CD4-positive, alpha-beta T cell (primary cell): ENCODE measurements at regions of chr12 and their contacts with region 1.

Region 1: GRCh38 chr12:48618541-48618940 is 48.7 kb upstream of the LALBA start:
- DNase-seq: peak; percentile 51 to 87 (median 68)
- ATAC-seq: peak; percentile 95
- H3K4me3 ChIP-seq: no peak overlapping the region
- H3K4me3 Mint-ChIP-seq: no peak overlapping the region
- H3K27ac ChIP-seq: no peak overlapping the region
- H3K27ac Mint-ChIP-seq: no peak overlapping the region
- H3K4me1 ChIP-seq: no peaks in the 10 kb centered on the region
- H3K4me1 Mint-ChIP-seq: no peaks in the 10 kb centered on the region
- H3K27me3 ChIP-seq: peaks cover 0 to 11% of the 10 kb centered on the region in 2 experiments
- H3K27me3 Mint-ChIP-seq: peaks cover 54% of the 10 kb centered on the region
- CTCF ChIP-seq: peak; percentile 95

Region 2: DNA sequence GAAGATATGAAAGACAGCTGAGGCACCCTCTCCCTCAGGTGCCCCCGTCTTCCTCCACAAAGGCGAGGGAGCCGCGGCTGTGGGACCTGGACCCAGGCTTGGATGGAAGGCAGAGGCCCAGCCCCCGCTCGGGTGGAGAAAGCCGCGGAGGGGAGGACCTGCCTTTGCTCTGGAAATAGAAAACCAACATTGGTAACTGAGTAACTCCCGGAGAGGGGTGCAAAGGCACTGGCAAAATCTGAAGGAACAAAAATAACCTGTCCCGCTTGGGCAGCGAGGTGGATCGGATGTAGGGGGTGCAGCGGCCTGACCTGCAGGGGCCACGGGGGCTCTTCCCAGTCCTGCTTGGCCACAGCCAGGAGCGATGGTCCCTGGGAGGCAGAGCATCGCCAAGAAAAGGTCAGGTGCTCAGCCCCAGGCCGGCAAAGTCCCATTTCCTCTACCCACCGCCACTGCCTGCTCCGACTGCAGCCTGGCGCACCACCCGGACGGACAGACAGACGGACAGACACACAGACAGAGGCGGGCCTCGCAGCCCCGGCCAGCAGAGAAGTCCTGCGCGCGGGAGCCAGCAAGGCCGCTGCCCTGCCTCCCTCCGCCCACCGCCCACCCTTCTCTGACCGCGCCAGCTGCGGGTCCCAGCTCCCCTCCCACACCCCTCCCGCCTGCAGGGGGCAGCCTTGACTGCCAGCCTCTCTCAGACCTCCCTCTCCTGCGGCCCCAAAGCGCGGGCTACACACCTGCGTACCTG is 676.5 kb before region 1 on chr12:
- CTCF ChIA-PET with region 1: no interaction called
- POLR2A ChIA-PET with region 1: no interaction called
- intact Hi-C with region 1: loop called (anchors 5 to 10 kb)
- DNase-seq: peak in 13 of 14 experiments; percentile 14 to 70 (median 43)
- ATAC-seq: peak; percentile 48
- H3K4me3 ChIP-seq: no peak overlapping the region
- H3K4me3 Mint-ChIP-seq: no peak overlapping the region
- H3K27ac ChIP-seq: no peak overlapping the region
- H3K27ac Mint-ChIP-seq: no peak overlapping the region
- H3K4me1 ChIP-seq: peaks cover 3% of the 10 kb centered on the region
- H3K4me1 Mint-ChIP-seq: no peaks in the 10 kb centered on the region
- H3K27me3 ChIP-seq: peaks cover 4 to 10% of the 10 kb centered on the region in 2 experiments
- H3K27me3 Mint-ChIP-seq: peaks cover 18% of the 10 kb centered on the region
- CTCF ChIP-seq: peak; percentile 26

Region 3: DNA sequence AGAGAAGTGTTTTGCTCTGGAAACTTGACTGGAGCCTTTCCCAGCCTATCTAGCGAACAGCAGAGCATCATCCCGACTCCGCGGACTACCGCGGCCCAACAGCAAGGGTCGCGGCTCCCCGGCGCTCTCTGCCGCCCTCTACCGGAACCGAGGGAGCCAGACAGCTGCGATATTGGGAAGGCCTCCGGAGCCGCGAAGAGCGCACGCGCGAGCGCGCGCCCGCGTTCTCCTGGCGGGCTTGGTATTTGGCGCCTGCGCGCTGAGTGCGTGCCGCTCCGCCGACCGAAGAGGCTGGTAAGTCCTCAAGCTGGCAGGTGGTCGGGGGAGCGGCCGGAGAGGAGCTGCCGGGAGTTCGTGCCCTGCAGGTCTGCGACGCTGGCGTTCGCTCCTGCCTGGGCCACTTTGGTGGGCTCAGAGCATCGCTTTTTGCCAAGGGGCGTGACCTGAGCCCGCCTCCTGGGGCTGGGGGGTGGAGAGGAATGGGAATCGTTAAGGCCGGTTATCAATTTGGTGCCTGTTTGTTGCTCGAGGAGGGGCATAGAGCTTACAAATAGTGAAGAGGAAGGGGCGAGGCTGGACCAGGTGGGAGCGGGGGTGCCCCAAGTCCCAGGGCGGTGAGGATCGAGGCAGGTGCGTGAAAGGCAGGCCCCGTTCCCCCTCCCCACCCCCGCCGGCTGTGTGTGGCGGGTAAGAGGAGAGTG is 655.1 kb before region 1 on chr12 and contains the start of gene TMEM106C:
- CTCF ChIA-PET with region 1: no interaction called
- POLR2A ChIA-PET with region 1: no interaction called
- intact Hi-C with region 1: loop called in 1 of 2 experiments (anchors 1 kb)
- DNase-seq: peak; percentile 84 to 97 (median 90)
- ATAC-seq: peak; percentile 97
- H3K4me3 ChIP-seq: peak within 1 kb of the TSS; percentile 85
- H3K4me3 Mint-ChIP-seq: peak within 1 kb of the TSS; percentile 95
- H3K27ac ChIP-seq: no peak within 1 kb of the TSS
- H3K27ac Mint-ChIP-seq: peak within 1 kb of the TSS; percentile 81
- H3K4me1 ChIP-seq: peaks cover 17% of the 10 kb centered on the region
- H3K4me1 Mint-ChIP-seq: peaks cover 38% of the 10 kb centered on the region
- H3K27me3 ChIP-seq: peaks cover 0 to 5% of the 10 kb centered on the region in 2 experiments
- H3K27me3 Mint-ChIP-seq: peaks cover 6% of the 10 kb centered on the region
- CTCF ChIP-seq: peak; percentile 97
- total RNA-seq, gene TMEM106C: 17.4 to 20.3 TPM

Region 4: DNA sequence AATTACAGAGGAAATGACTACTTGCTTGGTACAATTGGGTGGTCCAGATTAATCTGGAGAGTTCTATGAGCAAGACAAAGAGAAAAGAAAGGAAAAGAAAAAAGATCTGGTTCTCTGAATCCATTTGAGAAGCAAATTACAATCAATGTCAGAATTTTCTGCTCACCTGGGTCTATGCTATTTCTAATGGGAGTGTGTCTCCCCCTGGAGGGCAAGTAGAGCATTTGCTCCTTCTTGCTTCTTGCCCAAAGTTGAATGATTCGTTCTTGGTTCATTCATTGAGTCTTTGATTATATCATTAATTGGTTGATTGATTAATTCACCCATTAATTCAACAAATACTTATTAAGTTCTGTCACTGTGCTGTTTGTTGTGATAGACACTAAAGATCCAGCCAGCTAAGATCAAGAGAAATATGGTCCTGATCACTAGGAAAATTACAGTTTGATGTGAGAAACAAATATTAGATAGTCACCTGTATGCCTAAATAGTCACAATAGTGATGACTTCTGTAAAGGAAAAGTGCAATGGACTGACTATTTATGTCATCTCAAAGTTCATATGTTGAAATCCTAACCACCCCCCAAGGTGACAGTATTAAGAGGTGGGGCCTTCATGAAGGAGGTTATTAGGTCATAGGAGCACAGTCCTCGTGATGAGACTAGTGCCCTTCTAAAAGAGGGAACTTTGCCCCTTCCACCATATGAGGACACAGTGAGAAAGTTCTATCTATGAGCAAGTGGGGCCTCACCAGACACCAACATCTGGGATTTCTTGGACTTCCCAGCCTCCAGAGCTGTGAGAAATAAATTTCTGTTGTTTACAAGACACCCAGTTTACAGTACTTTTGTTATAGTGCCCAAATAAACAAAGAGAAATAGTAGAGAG is 453.2 kb before region 1 on chr12:
- CTCF ChIA-PET with region 1: no interaction called
- POLR2A ChIA-PET with region 1: no interaction called
- intact Hi-C with region 1: loop called (anchors 1 to 5 kb)
- DNase-seq: peak in 11 of 14 experiments; percentile 11 to 87 (median 44)
- ATAC-seq: peak; percentile 87
- H3K4me3 ChIP-seq: no peak overlapping the region
- H3K4me3 Mint-ChIP-seq: no peak overlapping the region
- H3K27ac ChIP-seq: no peak overlapping the region
- H3K27ac Mint-ChIP-seq: no peak overlapping the region
- H3K4me1 ChIP-seq: no peaks in the 10 kb centered on the region
- H3K4me1 Mint-ChIP-seq: peaks cover 7% of the 10 kb centered on the region
- H3K27me3 ChIP-seq: no peaks in the 10 kb centered on the region
- H3K27me3 Mint-ChIP-seq: peaks cover 20% of the 10 kb centered on the region
- CTCF ChIP-seq: peak; percentile 98

Region 5: GRCh38 chr12:48247181-48247966 is 371.2 kb before region 1 on chr12:
- CTCF ChIA-PET with region 1: no interaction called
- POLR2A ChIA-PET with region 1: no interaction called
- intact Hi-C with region 1: loop called in 1 of 2 experiments (anchors 5 kb)
- DNase-seq: no peak
- ATAC-seq: no peak
- H3K4me3 ChIP-seq: no peak overlapping the region
- H3K4me3 Mint-ChIP-seq: no peak overlapping the region
- H3K27ac ChIP-seq: no peak overlapping the region
- H3K27ac Mint-ChIP-seq: no peak overlapping the region
- H3K4me1 ChIP-seq: no peaks in the 10 kb centered on the region
- H3K4me1 Mint-ChIP-seq: no peaks in the 10 kb centered on the region
- H3K27me3 ChIP-seq: peaks cover 0 to 5% of the 10 kb centered on the region in 2 experiments
- H3K27me3 Mint-ChIP-seq: peaks cover 29% of the 10 kb centered on the region
- CTCF ChIP-seq: no peak